Mammary epithelial cell (primary cell): ENCODE measurements at regions of chr17 and their contacts with region 1.

Region 1: DNA sequence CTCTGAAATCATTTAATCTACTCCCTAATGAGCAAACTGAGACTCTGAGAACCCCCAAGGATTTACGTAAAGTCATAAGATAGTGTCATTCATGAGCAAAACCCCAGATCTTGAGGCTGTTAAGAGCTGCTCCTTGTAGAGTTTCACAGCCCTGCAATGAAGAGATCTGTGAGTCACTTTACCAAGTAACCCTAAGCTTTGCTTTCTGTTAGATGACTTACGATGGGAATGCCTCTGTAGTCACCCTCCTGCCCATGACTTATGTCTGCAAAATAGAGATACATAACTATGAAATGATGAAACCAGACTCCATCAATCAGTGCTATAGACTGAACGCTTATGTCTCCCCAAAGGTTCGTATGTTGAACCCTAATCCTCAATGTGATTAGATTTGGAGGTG is 117.7 kb downstream of the HS3ST3A1 start:
- DNase-seq: peak; percentile 16
- H3K4me3 ChIP-seq: no peak overlapping the region
- H3K27ac ChIP-seq: no peak overlapping the region
- H3K4me1 ChIP-seq: no peaks in the 10 kb centered on the region
- H3K27me3 ChIP-seq: no peaks in the 10 kb centered on the region
- CTCF ChIP-seq: no peak

Region 2: DNA sequence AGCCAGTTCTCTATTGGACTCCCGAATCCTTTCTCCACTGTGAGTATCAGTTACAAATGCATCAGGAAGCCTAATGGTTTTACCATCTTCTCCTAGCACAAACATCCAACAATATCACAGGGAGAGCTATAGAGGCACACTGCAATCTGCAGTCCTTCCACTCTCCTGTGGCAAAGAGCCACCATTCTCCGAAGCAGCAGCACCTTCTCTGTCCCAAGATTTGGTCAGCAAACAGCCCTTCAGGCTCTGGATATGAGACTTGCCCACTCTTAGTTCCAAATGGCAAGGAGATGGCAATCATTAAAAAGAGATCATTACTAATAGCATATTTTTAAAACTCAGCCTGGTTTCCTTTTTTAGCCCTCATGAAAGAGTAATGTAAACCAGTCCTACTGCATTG is 105.7 kb before region 1 on chr17:
- CTCF ChIA-PET with region 1: no interaction called
- dilution Hi-C with region 1: no loop called
- in situ Hi-C with region 1: no loop called
- intact Hi-C with region 1: no loop called
- DNase-seq: no peak
- H3K4me3 ChIP-seq: no peak overlapping the region
- H3K27ac ChIP-seq: no peak overlapping the region
- H3K4me1 ChIP-seq: no peaks in the 10 kb centered on the region
- H3K27me3 ChIP-seq: no peaks in the 10 kb centered on the region
- CTCF ChIP-seq: no peak

Region 3: DNA sequence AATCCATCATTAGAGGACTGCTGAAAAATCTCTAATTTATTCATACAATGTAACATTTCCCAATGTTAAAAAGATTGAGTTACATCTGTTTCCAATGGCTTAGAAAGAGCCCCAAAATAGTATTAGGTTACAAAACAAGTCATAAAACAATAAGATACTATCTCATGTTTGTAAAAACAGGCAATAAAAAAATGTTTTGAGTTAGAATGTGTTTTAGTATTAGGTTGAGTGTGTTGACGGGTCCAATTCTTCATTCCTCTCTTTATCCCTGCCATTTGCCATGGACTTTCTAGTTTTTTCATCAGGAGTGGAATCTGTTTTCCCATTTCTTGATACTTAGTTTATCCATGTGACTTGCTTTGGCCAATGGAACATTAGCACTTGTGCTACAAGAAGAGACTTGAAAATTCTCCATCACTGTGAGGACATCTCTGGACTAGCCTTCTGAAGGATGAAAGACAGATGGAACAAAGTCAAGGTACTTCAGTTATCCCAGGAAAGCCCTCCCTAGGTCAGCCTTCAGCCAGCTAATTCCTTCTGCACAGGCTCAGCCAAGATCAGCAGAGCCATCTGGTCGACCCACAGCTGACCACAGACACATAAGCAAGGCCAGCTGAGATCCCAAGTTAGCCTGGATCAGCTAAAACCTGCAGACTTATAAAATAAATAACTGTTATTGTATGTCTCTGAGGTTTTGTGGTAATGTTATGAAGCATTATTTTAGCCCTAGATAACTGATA is 34.4 kb after region 1 on chr17:
- CTCF ChIA-PET with region 1: no interaction called
- dilution Hi-C with region 1: loop called (anchors 5 kb)
- in situ Hi-C with region 1: no loop called
- intact Hi-C with region 1: no loop called
- DNase-seq: no peak
- H3K4me3 ChIP-seq: no peak overlapping the region
- H3K27ac ChIP-seq: no peak overlapping the region
- H3K4me1 ChIP-seq: no peaks in the 10 kb centered on the region
- H3K27me3 ChIP-seq: no peaks in the 10 kb centered on the region
- CTCF ChIP-seq: no peak

Region 4: GRCh38 chr17:13569398-13570123 is 85.5 kb after region 1 on chr17:
- CTCF ChIA-PET with region 1: no interaction called
- dilution Hi-C with region 1: no loop called
- in situ Hi-C with region 1: no loop called
- intact Hi-C with region 1: no loop called
- DNase-seq: no peak
- H3K4me3 ChIP-seq: no peak overlapping the region
- H3K27ac ChIP-seq: no peak overlapping the region
- H3K4me1 ChIP-seq: no peaks in the 10 kb centered on the region
- H3K27me3 ChIP-seq: no peaks in the 10 kb centered on the region
- CTCF ChIP-seq: no peak